ENCODE measurements at regions of chr1 and their contacts with region 1.

Region 1: GRCh38 chr1:43529206-43529731 is 1.4 kb upstream of the PTPRF start:
- DNase-seq: peak; percentile 75
- H3K4me3 ChIP-seq: no peak overlapping the region
- H3K27ac ChIP-seq: no peak overlapping the region
- H3K4me1 ChIP-seq: peaks cover 24% of the 10 kb centered on the region
- H3K27me3 ChIP-seq: no peaks in the 10 kb centered on the region
- CTCF ChIP-seq: peak; percentile 93 to 98

Region 2: DNA sequence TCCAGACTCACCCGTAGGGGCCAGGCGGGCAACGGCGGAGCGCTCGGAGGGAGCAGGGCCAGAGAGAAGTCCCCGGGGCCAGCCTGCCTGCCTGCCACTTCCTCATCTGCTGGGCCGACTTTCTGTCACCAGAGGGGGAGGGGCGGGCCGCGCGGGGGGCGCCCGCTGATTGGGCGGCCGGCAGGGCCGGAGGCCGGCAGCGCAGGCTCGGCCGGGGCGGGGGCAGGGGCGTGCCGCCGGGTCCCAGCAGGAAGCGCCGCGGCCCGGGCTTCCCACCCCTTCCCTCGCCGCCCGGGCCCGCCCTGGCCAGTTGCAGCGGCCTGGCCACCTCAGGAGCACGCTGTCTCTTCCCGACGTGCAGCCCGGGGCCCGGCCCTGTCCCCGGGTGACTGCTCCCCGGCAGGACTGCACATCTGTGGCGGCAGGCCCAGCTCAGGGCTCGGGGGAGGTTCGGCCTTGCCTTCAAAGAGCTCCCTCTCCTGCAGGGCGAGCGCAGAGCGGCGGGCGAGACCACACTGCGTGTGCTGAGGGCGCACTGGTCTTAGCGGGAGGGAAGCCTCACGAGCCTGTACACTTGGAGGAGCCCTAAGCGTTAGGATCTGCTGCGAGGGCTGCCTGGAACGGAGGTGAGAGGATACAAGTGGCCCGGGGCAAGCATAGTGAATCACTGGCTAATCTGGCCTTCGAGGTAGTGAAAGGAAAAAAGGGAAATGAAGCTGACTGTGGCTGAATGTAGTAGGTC is 161.2 kb before region 1 on chr1 and contains the start of gene ELOVL1:
- CTCF ChIA-PET with region 1: interaction called, 3 read pairs
- dilution Hi-C with region 1: no loop called
- in situ Hi-C with region 1: no loop called
- intact Hi-C with region 1: loop called (anchors 5 kb)
- DNase-seq: peak; percentile 84
- H3K4me3 ChIP-seq: peak within 1 kb of the TSS; percentile 76 to 81 (median 80)
- H3K27ac ChIP-seq: peak within 1 kb of the TSS; percentile 65
- H3K4me1 ChIP-seq: peaks cover 36% of the 10 kb centered on the region
- H3K27me3 ChIP-seq: no peaks in the 10 kb centered on the region
- CTCF ChIP-seq: peak in 1 of 2 donors; percentile 48
- total RNA-seq, gene ELOVL1: 34.7 to 137 TPM

Region 3: GRCh38 chr1:43549921-43550597 is 20.8 kb after region 1 on chr1:
- CTCF ChIA-PET with region 1: no interaction called
- dilution Hi-C with region 1: no loop called
- in situ Hi-C with region 1: no loop called
- intact Hi-C with region 1: loop called (anchors 1 kb)
- DNase-seq: peak; percentile 96
- H3K4me3 ChIP-seq: peak overlapping the region; percentile 44 to 55 (median 44)
- H3K27ac ChIP-seq: peak overlapping the region; percentile 92
- H3K4me1 ChIP-seq: peaks cover 53% of the 10 kb centered on the region
- H3K27me3 ChIP-seq: no peaks in the 10 kb centered on the region
- CTCF ChIP-seq: no peak

Region 4: GRCh38 chr1:43650310-43651085 is 121.2 kb after region 1 on chr1:
- CTCF ChIA-PET with region 1: interaction called, 9 read pairs
- dilution Hi-C with region 1: no loop called
- in situ Hi-C with region 1: no loop called
- intact Hi-C with region 1: loop called (anchors 1 kb)
- DNase-seq: peak; percentile 95
- H3K4me3 ChIP-seq: peak overlapping the region; percentile 69 to 81 (median 75)
- H3K27ac ChIP-seq: peak overlapping the region; percentile 92
- H3K4me1 ChIP-seq: peaks cover 20% of the 10 kb centered on the region
- H3K27me3 ChIP-seq: no peaks in the 10 kb centered on the region
- CTCF ChIP-seq: no peak

Region 5: GRCh38 chr1:43934101-43934985 is 405.1 kb after region 1 on chr1:
- CTCF ChIA-PET with region 1: no interaction called
- dilution Hi-C with region 1: loop called (anchors 25 kb)
- in situ Hi-C with region 1: loop called in 1 of 2 experiments (anchors 25 kb)
- intact Hi-C with region 1: loop called (anchors 1 kb)
- DNase-seq: peak; percentile 71
- H3K4me3 ChIP-seq: peak overlapping the region; percentile 69 to 74 (median 70)
- H3K27ac ChIP-seq: peak overlapping the region; percentile 81
- H3K4me1 ChIP-seq: peaks cover 73% of the 10 kb centered on the region
- H3K27me3 ChIP-seq: no peaks in the 10 kb centered on the region
- CTCF ChIP-seq: peak; percentile 89 to 95

Region 6: DNA sequence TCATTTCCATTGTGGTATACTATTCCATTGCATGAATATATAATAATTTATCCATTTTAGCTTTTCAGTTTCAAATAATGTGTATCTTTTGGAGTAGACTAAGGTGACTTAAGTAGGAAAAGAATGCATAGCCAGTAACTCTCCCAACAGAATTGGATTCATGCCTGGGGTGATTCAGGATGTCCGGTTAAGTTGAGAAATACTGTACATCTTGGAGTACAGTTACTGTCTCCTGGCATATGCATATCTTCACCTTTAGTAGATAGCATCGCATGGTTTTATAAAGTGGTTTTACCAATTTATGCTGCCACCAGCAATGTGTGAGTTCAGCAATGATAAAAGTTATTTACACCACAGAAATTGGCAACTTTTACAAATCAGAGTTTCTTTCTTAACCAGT is 520.6 kb after region 1 on chr1:
- CTCF ChIA-PET with region 1: interaction called, 4 read pairs
- dilution Hi-C with region 1: loop called (anchors 10 kb)
- in situ Hi-C with region 1: no loop called
- intact Hi-C with region 1: loop called (anchors 1 kb)
- DNase-seq: peak; percentile 90
- H3K4me3 ChIP-seq: no peak overlapping the region
- H3K27ac ChIP-seq: peak overlapping the region; percentile 18
- H3K4me1 ChIP-seq: peaks cover 36% of the 10 kb centered on the region
- H3K27me3 ChIP-seq: no peaks in the 10 kb centered on the region
- CTCF ChIP-seq: no peak